ENCODE measurements at regions of chr3 and their contacts with region 1.

Region 1: GRCh38 chr3:123081718-123082369 is 15.0 kb downstream of the PDIA5 start:
- DNase-seq: no peak
- CTCF ChIP-seq: no peak

Region 2: GRCh38 chr3:123055352-123055751 is 26.5 kb before region 1 on chr3:
- CTCF ChIA-PET with region 1: no interaction called
- POLR2A ChIA-PET with region 1: no interaction called
- DNase-seq: no peak
- CTCF ChIP-seq: no peak

Region 3: GRCh38 chr3:123066896-123067688 is 14.8 kb before region 1 on chr3 and contains the start of gene PDIA5:
- CTCF ChIA-PET with region 1: interaction called, 10 read pairs
- POLR2A ChIA-PET with region 1: interaction called, 4 read pairs
- DNase-seq: peak; percentile 90
- CTCF ChIP-seq: no peak

Region 4: DNA sequence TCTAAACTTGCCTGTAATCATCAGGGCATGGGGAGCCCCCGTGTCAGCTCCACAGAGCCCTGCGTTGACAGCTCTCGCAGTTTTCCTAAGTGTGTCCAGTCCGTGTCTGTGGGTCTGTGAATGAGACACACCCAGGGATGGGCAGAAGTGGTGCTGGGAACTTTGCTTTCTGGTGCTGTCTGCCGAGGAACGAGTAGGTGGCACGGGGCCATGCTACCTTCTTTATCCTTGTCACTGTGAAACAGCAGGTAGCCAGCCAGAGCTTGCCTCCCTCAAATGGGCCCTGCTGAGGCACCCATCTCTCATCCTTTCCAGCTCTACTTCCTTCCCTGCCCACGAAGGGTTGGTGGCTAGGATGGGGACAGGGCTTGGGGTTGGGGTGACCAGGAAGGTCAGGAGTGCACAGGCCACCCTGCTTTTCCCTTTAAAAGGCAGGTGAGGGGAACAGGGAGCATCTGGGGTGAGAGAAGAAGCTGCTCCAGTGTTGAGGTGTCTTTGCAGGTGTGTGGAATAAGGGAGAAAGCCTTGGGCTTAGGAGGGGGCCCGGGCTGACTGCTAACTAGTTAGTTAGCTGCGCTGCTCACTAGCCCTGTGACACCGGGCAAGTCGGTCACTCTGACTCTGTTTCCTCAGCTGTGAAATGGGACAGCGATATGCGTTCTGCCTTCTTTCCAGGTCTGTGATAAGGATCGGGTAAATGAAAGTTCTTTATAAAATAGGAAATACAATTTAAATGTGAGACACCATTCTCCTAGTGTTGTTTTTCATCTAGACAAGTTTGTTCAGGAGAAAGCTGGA is 12.9 kb after region 1 on chr3:
- CTCF ChIA-PET with region 1: interaction called, 10 read pairs
- POLR2A ChIA-PET with region 1: no interaction called
- DNase-seq: no peak
- CTCF ChIP-seq: no peak